ENCODE measurements at regions of chr19 and their contacts with region 1.

Region 1: GRCh38 chr19:1825909-1826556 is 14.0 kb upstream of the ATP8B3 start:
- DNase-seq: peak; percentile 49
- H3K4me3 ChIP-seq: no peak overlapping the region
- H3K27ac ChIP-seq: no peak overlapping the region
- H3K4me1 ChIP-seq: no peaks in the 10 kb centered on the region
- H3K27me3 ChIP-seq: no peaks in the 10 kb centered on the region
- CTCF ChIP-seq: peak; percentile 88 to 91
- POLR2A ChIP-seq: no peak

Region 2: DNA sequence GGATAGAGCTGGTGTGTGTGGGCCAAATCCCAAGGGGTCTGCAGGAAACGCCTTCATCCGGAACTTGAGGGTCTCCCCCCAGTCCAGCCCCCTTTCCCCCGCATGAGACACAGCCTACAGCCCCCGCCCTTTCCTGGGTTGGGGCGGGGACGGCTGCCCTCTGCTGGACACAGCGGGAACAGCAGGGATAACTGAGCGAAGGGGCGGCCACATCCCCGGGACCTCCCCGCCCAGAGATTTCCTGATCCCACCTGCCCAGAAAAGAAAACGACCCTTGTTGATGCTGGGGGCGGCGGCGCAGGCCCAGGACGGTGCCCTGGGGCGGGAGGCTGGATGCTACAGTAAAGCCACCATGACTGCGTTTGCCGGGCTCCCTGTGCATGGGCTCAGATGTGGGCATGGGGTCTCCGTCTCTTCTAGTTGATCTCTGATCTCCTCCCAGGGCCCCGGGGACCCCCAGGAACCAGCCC is 58.5 kb before region 1 on chr19:
- CTCF ChIA-PET with region 1: interaction called, 16 read pairs
- POLR2A ChIA-PET with region 1: no interaction called
- dilution Hi-C with region 1: no loop called
- intact Hi-C with region 1: no loop called
- DNase-seq: peak; percentile 24
- H3K4me3 ChIP-seq: no peak overlapping the region
- H3K27ac ChIP-seq: no peak overlapping the region
- H3K4me1 ChIP-seq: no peaks in the 10 kb centered on the region
- H3K27me3 ChIP-seq: peaks cover 43% of the 10 kb centered on the region in 2 experiments
- CTCF ChIP-seq: peak; percentile 88 to 95
- POLR2A ChIP-seq: no peak

Region 3: GRCh38 chr19:1789261-1790041 is 36.6 kb before region 1 on chr19:
- CTCF ChIA-PET with region 1: interaction called, 15 read pairs
- POLR2A ChIA-PET with region 1: no interaction called
- dilution Hi-C with region 1: no loop called
- intact Hi-C with region 1: loop called (anchors 5 kb)
- DNase-seq: no peak
- H3K4me3 ChIP-seq: no peak overlapping the region
- H3K27ac ChIP-seq: no peak overlapping the region
- H3K4me1 ChIP-seq: no peaks in the 10 kb centered on the region
- H3K27me3 ChIP-seq: no peaks in the 10 kb centered on the region
- CTCF ChIP-seq: no peak
- POLR2A ChIP-seq: no peak

Region 4: GRCh38 chr19:1812469-1813196 is 13.4 kb before region 1 on chr19:
- CTCF ChIA-PET with region 1: interaction called, 24 read pairs
- POLR2A ChIA-PET with region 1: no interaction called
- dilution Hi-C with region 1: no loop called
- intact Hi-C with region 1: no loop called
- DNase-seq: peak; percentile 88
- H3K4me3 ChIP-seq: peak overlapping the region; percentile 36 to 66 (median 39)
- H3K27ac ChIP-seq: peak overlapping the region; percentile 48
- H3K4me1 ChIP-seq: peaks cover 13% of the 10 kb centered on the region
- H3K27me3 ChIP-seq: no peaks in the 10 kb centered on the region
- CTCF ChIP-seq: peak; percentile 47 to 62
- POLR2A ChIP-seq: no peak